Dorsolateral prefrontal cortex (tissue), 120 donors: ENCODE measurements at regions of chr6 and their contacts with region 1.

Region 1: GRCh38 chr6:125790358-125791150 is at the start of gene NCOA7:
- DNase-seq: peak; percentile 71 to 91 (median 85)
- H3K4me3 ChIP-seq: peak within 1 kb of the TSS; percentile 58 to 100 (median 95)
- H3K27ac ChIP-seq: peak within 1 kb of the TSS; percentile 93 to 100 (median 99)
- H3K27me3 ChIP-seq: no peaks in the 10 kb centered on the region
- CTCF ChIP-seq: peak in 24 of 56 donors; percentile 3 to 49 (median 16)
- total RNA-seq, gene NCOA7: 63.5 to 252 (median 193) TPM

Region 2: GRCh38 chr6:125779924-125780539 is 10.5 kb before region 1 on chr6:
- intact Hi-C with region 1: loop called in 1 of 2 experiments (anchors 1 kb)
- DNase-seq: peak; percentile 69 to 93 (median 83)
- H3K4me3 ChIP-seq: peak overlapping the region; percentile 42 to 93 (median 77)
- H3K27ac ChIP-seq: peak overlapping the region; percentile 72 to 99 (median 93)
- H3K27me3 ChIP-seq: no peaks in the 10 kb centered on the region
- CTCF ChIP-seq: peak in 52 of 56 donors; percentile 23 to 71 (median 51)

Region 3: DNA sequence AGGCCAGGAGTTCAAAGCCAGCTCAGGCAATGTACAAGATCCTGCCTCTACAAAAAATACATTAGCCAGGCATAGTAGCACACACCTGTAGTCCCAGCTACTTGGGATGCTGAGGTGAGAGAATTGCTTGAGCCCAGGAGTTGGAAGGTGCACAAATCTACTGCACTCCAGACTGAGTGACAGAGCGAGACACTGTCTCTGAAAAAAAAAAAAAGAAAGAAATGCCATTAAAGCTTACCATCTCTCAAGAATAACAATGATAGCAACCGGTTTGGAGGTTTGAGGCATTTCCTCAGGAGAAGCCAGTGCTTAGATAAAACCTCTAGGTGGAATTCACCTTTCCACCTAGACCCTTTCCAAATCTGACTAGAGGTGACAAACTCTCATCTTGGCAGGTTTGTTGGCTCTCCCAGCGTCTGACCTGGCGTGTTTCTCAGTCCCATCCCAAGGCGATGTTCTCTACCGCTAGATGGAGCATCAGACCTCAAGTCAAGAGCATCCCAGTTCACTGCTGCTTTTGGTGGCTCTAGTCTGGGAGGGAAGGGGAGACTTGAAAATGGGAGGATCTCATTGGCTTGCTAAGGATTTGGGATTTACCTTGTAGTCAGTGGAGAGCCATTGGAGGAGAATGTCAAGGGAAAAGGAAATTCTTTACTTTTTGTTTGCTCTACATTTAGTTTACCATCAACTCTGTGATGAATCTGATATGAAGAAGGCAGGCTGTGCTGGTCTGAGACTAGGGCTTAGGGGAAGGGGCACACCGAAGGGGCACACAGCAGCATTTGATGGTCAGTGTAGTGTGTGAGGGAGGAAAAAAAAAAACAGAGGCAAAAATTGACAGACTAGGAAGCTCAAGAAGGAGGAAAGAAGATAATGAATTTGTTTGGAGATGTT is 68.1 kb after region 1 on chr6:
- intact Hi-C with region 1: loop called (anchors 5 kb)
- DNase-seq: peak in 8 of 10 donors; percentile 45 to 74 (median 56)
- H3K4me3 ChIP-seq: no peak overlapping the region
- H3K27ac ChIP-seq: peak overlapping the region in 55 of 59 donors; percentile 4 to 99 (median 73)
- H3K27me3 ChIP-seq: no peaks in the 10 kb centered on the region
- CTCF ChIP-seq: peak; percentile 40 to 88 (median 71)

Region 4: GRCh38 chr6:125867483-125867935 is 77.0 kb after region 1 on chr6:
- intact Hi-C with region 1: loop called in 1 of 2 experiments (anchors 2 kb)
- DNase-seq: no peak
- H3K4me3 ChIP-seq: no peak overlapping the region
- H3K27ac ChIP-seq: peak overlapping the region; percentile 73 to 99 (median 94)
- H3K27me3 ChIP-seq: no peaks in the 10 kb centered on the region
- CTCF ChIP-seq: no peak

Region 5: DNA sequence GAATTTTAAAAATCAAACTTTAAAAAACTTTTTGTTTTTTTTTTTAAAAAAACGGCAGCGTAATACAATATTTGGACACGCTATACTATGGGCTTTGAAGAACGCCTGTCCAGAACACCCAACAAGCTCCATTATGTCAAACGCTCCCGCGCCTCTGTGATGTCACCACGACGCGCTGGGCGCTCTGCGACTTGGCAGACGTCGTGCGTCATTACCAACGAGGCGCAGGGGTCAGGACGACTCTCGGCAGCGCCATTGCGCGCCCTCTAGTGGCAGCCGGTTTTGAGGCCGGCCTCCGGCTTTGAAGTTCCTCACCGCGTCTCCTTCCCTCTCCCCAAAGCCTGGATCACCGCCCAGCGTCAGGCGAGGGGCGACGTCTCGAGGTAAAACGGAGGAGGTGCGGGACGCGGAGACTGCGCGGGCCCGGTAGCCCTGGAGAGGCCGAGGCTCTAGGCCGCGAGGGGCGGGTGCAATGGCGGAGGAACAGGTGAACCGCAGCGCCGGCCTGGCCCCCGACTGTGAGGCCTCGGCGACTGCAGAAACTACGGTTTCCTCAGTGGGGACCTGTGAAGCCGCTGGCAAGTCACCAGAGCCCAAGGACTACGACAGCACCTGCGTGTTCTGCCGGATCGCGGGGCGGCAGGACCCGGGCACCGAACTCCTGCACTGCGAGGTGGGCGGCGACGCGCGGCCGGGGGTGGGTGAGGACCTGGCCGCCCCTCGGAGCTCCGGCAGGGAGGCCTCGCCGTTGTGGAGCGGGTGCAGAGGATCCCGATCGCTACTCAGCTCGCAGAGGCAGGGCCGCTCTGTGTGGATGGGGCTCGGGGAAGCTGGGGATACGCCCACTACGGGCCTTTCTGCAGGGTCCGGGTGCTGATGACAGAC is 166.2 kb after region 1 on chr6 and contains the start of gene HINT3:
- intact Hi-C with region 1: loop called (anchors 2 kb)
- DNase-seq: peak; percentile 96 to 98 (median 98)
- H3K4me3 ChIP-seq: peak within 1 kb of the TSS; percentile 67 to 100 (median 95)
- H3K27ac ChIP-seq: peak within 1 kb of the TSS; percentile 93 to 100 (median 99)
- H3K27me3 ChIP-seq: no peaks in the 10 kb centered on the region
- CTCF ChIP-seq: peak; percentile 94 to 100 (median 98)
- total RNA-seq, gene HINT3: 33.6 to 54.2 (median 42.3) TPM